Pancreas (tissue), 10 donors: ENCODE measurements at regions of chr11 and their contacts with region 1.

Region 1: DNA sequence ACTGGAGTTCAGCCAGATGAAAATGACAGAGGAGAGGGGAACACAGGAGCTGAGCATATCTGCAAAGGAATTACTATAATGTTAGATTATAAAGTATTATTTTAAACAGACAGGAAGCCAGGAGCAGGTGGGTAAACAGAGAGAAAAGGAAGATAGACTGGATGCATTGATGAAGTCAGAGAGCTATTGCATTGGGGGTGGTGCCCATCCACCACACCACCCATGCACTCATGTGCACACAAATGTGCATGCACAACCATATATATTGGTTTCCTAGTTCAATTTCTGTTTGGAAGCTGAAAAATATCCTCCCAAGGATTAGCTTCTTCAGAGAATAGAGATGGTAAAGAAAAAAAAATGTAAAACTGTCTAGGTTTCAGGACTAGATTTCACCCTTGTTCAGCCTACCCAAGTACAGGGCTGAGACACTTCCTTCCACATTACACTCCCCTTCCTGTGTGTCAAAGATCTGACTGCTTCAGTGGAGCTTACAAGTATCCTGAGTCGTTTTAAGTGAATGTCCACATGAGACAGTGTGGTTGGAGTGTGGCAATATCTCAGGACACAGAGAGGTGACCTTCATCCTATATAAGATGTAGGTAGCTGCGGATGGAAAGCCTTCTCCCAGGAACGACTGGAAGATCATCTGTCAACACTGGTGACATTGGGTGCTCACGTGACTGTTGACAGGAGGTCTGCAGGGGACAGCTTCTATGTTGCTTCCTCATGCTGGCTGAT is 12.2 kb upstream of the SMPD1 start:
- DNase-seq: no peak
- ATAC-seq: peak in 1 of 4 donors; percentile 41
- H3K4me3 ChIP-seq: no peak overlapping the region
- H3K27ac ChIP-seq: no peak overlapping the region
- H3K4me1 ChIP-seq: no peaks in the 10 kb centered on the region
- H3K27me3 ChIP-seq: no peaks in the 10 kb centered on the region
- CTCF ChIP-seq: no peak

Region 2: DNA sequence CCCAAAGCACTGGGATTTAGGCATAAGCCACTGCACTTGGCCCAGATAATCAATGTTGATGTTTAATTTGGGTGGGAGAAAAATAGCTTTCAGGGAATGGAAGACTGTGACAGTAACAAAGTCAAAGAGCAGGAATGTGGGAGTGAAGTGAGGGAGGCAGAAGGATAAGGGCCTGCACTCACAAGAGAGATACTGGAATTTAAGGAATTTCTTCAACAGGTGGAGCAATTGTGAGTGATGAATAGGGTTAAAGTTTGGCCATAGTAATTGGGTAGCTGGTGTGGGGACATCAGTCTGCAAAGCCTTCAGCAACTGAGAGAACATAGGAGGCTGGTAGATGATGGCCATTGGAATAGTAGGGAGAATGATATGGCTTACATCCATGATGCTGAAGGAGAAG is 49.4 kb after region 1 on chr11:
- intact Hi-C with region 1: loop called in 1 of 3 experiments (anchors 5 kb)
- DNase-seq: no peak
- ATAC-seq: no peak
- H3K4me3 ChIP-seq: no peak overlapping the region
- H3K27ac ChIP-seq: no peak overlapping the region
- H3K4me1 ChIP-seq: no peaks in the 10 kb centered on the region
- H3K27me3 ChIP-seq: no peaks in the 10 kb centered on the region
- CTCF ChIP-seq: no peak

Region 3: DNA sequence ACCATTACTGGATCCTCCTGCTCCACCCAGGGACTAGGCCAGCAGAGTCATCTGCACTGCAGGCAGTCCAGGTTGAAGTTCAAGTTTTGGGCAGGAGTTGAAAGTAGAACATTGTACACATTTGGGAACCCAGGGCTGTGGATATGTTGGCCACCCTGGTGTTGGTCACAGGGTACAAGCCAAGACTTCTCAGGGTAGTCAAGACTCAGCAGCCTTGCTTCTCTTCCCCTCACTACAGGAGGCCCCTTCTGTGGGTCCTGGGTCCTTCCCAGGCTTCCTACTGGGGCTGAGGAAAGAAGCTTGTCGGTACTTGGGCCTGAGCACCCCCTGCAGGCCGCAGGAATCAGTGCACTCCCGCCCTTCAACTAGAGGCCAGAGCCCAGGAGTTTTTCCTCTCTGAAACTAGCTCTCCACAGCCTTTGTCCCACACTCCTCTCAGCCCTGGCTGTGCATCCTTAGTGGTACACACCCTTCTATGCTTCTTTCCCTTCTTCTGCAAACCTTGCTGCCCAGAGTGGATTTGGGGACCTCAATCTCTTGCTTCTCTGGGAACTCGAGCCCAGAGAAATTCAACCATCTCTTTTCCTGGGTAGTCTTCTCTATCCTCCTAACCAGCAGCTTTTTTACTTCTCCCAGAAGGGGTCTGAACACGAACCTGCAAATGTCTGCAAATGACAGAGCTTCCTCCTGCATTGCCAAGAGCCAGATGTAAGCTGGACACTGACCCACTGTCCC is 65.4 kb after region 1 on chr11:
- intact Hi-C with region 1: loop called in 2 of 3 experiments (anchors 5 to 10 kb)
- DNase-seq: peak; percentile 26 to 67 (median 50)
- ATAC-seq: peak; percentile 79 to 92 (median 88)
- H3K4me3 ChIP-seq: no peak overlapping the region
- H3K27ac ChIP-seq: no peak overlapping the region
- H3K4me1 ChIP-seq: no peaks in the 10 kb centered on the region
- H3K27me3 ChIP-seq: no peaks in the 10 kb centered on the region
- CTCF ChIP-seq: peak; percentile 64 to 84 (median 72)